Mammary epithelial cell (primary cell): ENCODE measurements at regions of chr16 and their contacts with region 1.

Region 1: GRCh38 chr16:30091474-30092372 is at the start of gene TBX6:
- DNase-seq: peak; percentile 84
- H3K4me3 ChIP-seq: peak within 1 kb of the TSS; percentile 33 to 57 (median 52)
- H3K27ac ChIP-seq: peak within 1 kb of the TSS; percentile 0
- H3K4me1 ChIP-seq: peaks cover 52% of the 10 kb centered on the region
- H3K27me3 ChIP-seq: no peaks in the 10 kb centered on the region
- CTCF ChIP-seq: peak; percentile 61 to 79
- total RNA-seq, gene TBX6: 0.73 TPM in 1 of 2 donors, not detected in the other

Region 2: DNA sequence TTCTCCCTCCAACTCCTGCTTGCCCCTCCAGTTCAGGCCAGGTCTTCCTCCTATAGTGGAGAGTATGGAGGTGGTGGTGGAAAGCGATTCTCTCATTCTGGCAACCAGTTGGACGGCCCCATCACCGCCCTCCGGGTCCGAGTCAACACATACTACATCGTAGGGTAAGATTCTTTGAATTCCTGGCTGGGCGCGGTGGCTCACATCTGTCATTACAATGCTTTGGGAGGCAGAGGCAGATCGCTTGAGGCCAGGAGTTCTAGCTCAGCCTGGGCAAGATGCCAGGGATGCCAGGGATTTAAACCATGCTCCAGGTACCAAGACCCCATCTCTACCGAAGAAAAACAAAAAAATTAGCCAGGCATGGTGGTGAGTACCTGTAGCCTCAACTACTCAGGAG is 312.2 kb before region 1 on chr16:
- CTCF ChIA-PET with region 1: interaction called, 14 read pairs
- dilution Hi-C with region 1: no loop called
- in situ Hi-C with region 1: no loop called
- intact Hi-C with region 1: no loop called
- DNase-seq: peak; percentile 20
- H3K4me3 ChIP-seq: no peak overlapping the region
- H3K27ac ChIP-seq: no peak overlapping the region
- H3K4me1 ChIP-seq: peaks cover 23% of the 10 kb centered on the region
- H3K27me3 ChIP-seq: no peaks in the 10 kb centered on the region
- CTCF ChIP-seq: no peak

Region 3: GRCh38 chr16:30075507-30076275 is 16.0 kb before region 1 on chr16 and contains the start of gene PPP4C:
- CTCF ChIA-PET with region 1: no interaction called
- dilution Hi-C with region 1: no loop called
- in situ Hi-C with region 1: no loop called
- intact Hi-C with region 1: loop called (anchors 2 kb)
- DNase-seq: peak; percentile 85
- H3K4me3 ChIP-seq: peak within 1 kb of the TSS; percentile 78 to 99 (median 89)
- H3K27ac ChIP-seq: peak within 1 kb of the TSS; percentile 80
- H3K4me1 ChIP-seq: peaks cover 14% of the 10 kb centered on the region
- H3K27me3 ChIP-seq: no peaks in the 10 kb centered on the region
- CTCF ChIP-seq: no peak
- total RNA-seq, gene PPP4C: 125 to 221 TPM

Region 4: DNA sequence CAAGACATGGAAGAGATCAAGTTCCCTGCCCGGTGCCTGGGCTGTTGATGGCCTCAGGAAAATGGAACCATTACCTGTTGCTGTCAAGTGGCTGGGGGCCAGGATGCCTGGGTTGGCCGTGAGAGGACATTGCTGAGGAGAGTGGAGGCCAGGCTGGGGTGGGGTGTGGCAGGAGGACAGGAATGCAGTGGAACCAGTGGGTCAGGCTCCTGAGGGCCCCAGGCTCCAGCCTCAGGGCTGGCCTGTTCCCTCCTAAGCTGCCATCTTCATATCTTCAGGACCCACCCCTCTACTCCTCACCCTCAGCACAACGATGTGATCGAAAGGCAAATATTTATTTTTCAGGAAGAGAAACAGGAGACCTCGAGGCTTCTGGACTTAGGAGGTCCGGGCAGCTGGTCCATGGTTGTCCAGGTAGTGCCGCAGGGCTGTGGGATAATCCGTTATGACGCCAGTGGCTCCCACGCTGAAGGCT is 12.8 kb after region 1 on chr16:
- CTCF ChIA-PET with region 1: no interaction called
- dilution Hi-C with region 1: no loop called
- in situ Hi-C with region 1: no loop called
- intact Hi-C with region 1: no loop called
- DNase-seq: no peak
- H3K4me3 ChIP-seq: no peak overlapping the region
- H3K27ac ChIP-seq: no peak overlapping the region
- H3K4me1 ChIP-seq: peaks cover 6% of the 10 kb centered on the region
- H3K27me3 ChIP-seq: no peaks in the 10 kb centered on the region
- CTCF ChIP-seq: no peak

Region 5: GRCh38 chr16:30183233-30184095 is 91.7 kb after region 1 on chr16 and contains the start of gene CORO1A:
- CTCF ChIA-PET with region 1: no interaction called
- dilution Hi-C with region 1: no loop called
- in situ Hi-C with region 1: loop called in 1 of 2 experiments (anchors 25 kb)
- intact Hi-C with region 1: no loop called
- DNase-seq: peak; percentile 72
- H3K4me3 ChIP-seq: peak within 1 kb of the TSS; percentile 50 to 68 (median 61)
- H3K27ac ChIP-seq: no peak within 1 kb of the TSS
- H3K4me1 ChIP-seq: peaks cover 15% of the 10 kb centered on the region
- H3K27me3 ChIP-seq: no peaks in the 10 kb centered on the region
- CTCF ChIP-seq: no peak
- total RNA-seq, gene CORO1A: 10.2 to 27.1 TPM

Region 6: DNA sequence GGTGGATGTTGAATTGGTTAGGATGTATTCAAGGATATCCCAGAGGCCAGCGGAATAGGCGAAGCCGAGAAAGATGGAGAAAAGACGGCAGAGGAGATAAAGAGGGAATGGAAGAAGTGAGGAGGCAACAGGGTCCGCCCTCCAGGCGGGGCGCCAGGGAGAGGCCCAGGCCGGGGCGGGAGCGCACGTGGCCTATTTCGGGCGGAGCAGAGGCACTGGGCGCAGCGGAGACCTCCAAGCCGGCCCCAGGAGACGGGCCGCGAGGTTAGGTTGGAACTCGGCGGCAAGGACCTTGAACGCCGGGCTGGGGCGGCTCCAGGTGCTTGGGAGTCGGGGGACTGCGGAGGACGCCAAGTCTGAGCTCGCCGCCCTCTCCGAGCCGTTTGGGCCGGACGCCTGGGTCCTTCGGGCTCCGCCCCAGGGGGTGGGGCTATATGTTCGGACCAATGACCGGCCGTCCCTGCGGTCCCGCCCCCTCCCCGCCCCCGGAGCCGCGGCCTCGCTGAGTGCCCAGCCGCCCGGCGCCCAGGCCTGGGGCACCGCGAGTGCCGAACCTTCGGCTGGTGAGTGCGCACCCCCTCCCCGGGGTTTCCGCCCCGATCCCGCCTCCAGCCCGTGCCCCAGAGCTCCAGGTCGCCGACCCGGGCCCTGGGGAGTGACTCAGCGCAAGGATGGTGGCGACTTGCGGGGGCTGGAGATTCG is 315.5 kb after region 1 on chr16 and contains the start of gene ZNF771:
- CTCF ChIA-PET with region 1: no interaction called
- dilution Hi-C with region 1: no loop called
- in situ Hi-C with region 1: loop called (anchors 10 to 25 kb)
- intact Hi-C with region 1: loop called (anchors 2 kb)
- DNase-seq: peak; percentile 83
- H3K4me3 ChIP-seq: peak within 1 kb of the TSS; percentile 48 to 82 (median 82)
- H3K27ac ChIP-seq: peak within 1 kb of the TSS; percentile 64
- H3K4me1 ChIP-seq: peaks cover 12% of the 10 kb centered on the region
- H3K27me3 ChIP-seq: no peaks in the 10 kb centered on the region
- CTCF ChIP-seq: peak in 1 of 2 donors; percentile 10
- total RNA-seq, gene ZNF771: 6.3 to 6.5 TPM

Region 7: DNA sequence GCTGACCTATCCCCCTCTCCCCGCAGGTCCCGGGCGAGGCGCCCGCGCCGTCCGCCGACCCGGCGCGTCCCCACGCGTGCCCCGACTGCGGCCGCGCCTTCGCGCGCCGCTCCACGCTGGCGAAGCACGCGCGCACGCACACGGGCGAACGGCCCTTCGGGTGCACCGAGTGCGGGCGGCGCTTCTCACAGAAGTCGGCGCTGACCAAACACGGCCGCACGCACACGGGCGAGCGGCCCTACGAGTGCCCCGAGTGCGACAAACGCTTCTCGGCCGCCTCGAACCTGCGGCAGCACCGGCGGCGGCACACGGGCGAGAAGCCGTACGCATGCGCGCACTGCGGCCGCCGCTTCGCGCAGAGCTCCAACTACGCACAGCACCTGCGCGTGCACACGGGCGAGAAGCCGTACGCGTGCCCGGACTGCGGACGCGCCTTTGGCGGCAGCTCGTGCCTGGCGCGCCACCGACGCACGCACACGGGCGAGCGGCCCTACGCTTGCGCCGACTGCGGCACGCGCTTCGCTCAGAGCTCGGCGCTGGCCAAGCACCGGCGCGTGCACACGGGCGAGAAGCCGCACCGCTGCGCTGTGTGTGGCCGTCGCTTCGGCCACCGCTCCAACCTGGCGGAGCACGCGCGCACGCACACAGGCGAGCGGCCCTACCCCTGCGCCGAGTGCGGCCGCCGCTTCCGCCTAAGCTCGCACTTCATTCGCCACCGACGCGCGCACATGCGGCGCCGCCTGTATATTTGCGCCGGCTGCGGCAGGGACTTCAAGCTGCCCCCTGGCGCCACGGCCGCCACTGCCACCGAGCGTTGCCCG is 326.0 kb after region 1 on chr16:
- CTCF ChIA-PET with region 1: no interaction called
- dilution Hi-C with region 1: no loop called
- in situ Hi-C with region 1: loop called (anchors 10 to 25 kb)
- intact Hi-C with region 1: no loop called
- DNase-seq: peak; percentile 92
- H3K4me3 ChIP-seq: peak overlapping the region in 2 of 3 experiments; percentile 50 to 62
- H3K27ac ChIP-seq: no peak overlapping the region
- H3K4me1 ChIP-seq: peaks cover 13% of the 10 kb centered on the region
- H3K27me3 ChIP-seq: no peaks in the 10 kb centered on the region
- CTCF ChIP-seq: peak in 1 of 2 donors; percentile 22